Heart left ventricle (tissue), 16 donors: ENCODE measurements at regions of chr17 and their contacts with region 1.

Region 1: DNA sequence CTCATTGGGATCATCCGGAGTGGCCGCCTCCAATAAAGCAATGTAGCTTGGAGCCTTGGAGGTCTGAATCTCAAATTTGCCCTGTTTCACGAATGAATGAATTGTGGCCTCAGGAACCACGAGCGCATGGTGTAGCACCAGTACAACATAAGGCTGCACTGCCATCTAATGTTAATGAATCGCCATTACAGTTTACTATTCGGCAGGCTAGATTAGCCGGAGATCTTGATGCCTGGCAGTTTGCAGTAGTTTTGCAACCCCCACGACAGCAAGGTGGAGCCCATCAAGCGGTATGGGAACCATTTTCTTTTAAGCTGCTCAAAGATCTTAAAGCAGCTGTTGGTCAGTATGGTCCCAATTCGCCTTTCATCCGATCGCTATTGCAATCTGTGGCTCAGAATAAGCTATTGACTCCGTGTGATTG is 18.8 kb downstream of the ALOX15B start:
- DNase-seq: peak in 1 of 5 donors; percentile 37
- ATAC-seq: peak; percentile 68 to 86 (median 82)
- H3K4me3 ChIP-seq: no peak overlapping the region
- H3K27ac ChIP-seq: no peak overlapping the region
- H3K4me1 ChIP-seq: peaks cover 0 to 32% (median 1%) of the 10 kb centered on the region in 12 donors
- H3K27me3 ChIP-seq: peaks cover 9 to 47% (median 33%) of the 10 kb centered on the region in 9 donors
- CTCF ChIP-seq: peak; percentile 66 to 88 (median 72)
- POLR2A ChIP-seq: no peak

Region 2: DNA sequence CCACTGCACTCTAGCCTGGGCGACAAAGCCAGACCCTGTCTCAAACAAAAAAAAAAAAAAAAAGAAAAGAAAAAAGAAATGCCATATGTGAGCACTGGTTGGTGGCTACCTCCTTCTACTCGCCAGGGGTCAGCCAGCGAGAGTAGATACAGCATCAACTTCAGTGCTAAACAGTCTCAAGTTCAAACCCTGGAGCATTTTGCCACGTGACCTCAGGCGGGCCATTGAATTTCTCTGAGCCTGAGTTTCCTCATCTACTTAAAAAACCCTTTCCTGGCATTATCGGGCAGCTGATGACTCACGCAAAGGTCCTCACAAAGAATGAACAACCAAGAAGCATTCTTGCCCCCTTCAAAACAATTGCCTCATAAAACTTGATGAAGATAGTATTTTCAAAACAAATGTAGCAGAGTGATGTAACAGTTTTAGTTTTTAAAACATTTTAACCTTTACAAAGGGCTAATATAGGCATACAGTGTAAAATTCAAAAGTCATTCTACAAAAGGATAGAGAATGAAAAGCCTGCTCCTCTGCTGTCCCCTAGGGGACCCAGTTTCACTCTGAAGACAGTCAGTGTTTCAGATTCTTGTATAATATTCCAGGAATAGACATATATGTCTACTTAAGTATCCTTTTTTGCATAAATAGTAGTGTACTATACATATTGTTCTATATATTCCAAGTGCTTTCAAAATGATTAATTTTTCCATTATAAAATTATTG is 311.8 kb before region 1 on chr17:
- intact Hi-C with region 1: loop called in 3 of 10 experiments (anchors 5 to 10 kb)
- DNase-seq: no peak
- ATAC-seq: no peak
- H3K4me3 ChIP-seq: no peak overlapping the region
- H3K27ac ChIP-seq: no peak overlapping the region
- H3K4me1 ChIP-seq: peaks cover 0 to 10% (median 5%) of the 10 kb centered on the region in 12 donors
- H3K27me3 ChIP-seq: peaks cover 0 to 5% (median 0%) of the 10 kb centered on the region in 9 donors
- CTCF ChIP-seq: no peak
- POLR2A ChIP-seq: no peak

Region 3: GRCh38 chr17:7862692-7863437 is 194.8 kb before region 1 on chr17:
- intact Hi-C with region 1: loop called in 1 of 10 experiments (anchors 5 kb)
- DNase-seq: peak in 1 of 5 donors; percentile 49
- ATAC-seq: no peak
- H3K4me3 ChIP-seq: no peak overlapping the region
- H3K27ac ChIP-seq: no peak overlapping the region
- H3K4me1 ChIP-seq: peaks cover 0 to 20% (median 13%) of the 10 kb centered on the region in 12 donors
- H3K27me3 ChIP-seq: no peaks in the 10 kb centered on the region
- CTCF ChIP-seq: peak; percentile 69 to 90 (median 83)
- POLR2A ChIP-seq: no peak

Region 4: DNA sequence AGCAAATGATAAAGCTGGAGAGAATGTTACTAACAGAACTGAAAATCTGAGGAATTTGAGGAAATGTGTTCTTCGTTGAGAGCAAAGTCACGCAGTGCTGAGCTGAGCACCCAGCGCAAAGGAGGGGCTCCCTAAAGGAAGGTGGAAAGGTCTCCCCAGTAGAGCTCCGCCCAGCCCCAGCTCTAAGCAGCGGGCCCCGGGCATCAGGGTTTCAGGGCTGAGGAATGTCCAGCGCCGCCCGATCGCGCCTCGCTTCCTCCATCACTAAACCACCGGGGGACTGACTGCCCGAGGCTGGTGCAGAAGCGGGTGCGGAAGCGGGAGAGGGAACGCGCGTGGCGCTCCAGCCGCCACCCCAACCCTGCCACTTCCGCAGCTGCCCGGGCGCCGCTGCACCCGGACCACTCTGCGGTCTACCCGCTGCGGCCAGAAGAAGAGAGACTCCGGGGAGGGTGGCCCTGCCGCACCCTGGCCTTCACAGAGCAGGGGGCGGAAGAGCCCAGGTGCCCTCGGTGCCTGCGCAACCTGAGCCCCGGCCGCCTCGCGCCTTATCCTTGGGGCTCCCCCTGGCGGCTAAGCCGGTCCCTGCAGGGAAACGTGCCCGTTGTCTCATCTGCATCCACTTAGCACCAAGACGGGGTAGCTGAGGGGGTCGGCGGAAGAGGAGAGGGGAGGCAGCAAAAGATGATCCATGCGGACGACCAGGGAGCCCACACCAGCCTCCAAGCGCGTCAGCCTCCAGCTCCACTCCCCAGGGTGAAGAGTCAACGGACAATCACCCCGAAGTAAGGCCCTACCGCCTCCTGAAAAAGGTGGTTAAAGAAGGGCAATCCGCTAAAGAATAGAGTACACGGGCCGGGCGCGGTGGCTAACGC is 67.7 kb before region 1 on chr17:
- intact Hi-C with region 1: loop called in 1 of 10 experiments (anchors 5 kb)
- DNase-seq: peak; percentile 73 to 92 (median 83)
- ATAC-seq: peak; percentile 54 to 87 (median 84)
- H3K4me3 ChIP-seq: peak overlapping the region; percentile 16 to 75 (median 63)
- H3K27ac ChIP-seq: peak overlapping the region in 5 of 12 donors; percentile 8 to 84 (median 62)
- H3K4me1 ChIP-seq: peaks cover 0 to 19% (median 5%) of the 10 kb centered on the region in 12 donors
- H3K27me3 ChIP-seq: peaks cover 0 to 6% (median 0%) of the 10 kb centered on the region in 9 donors
- CTCF ChIP-seq: peak; percentile 93 to 100 (median 95)
- POLR2A ChIP-seq: no peak

Region 5: DNA sequence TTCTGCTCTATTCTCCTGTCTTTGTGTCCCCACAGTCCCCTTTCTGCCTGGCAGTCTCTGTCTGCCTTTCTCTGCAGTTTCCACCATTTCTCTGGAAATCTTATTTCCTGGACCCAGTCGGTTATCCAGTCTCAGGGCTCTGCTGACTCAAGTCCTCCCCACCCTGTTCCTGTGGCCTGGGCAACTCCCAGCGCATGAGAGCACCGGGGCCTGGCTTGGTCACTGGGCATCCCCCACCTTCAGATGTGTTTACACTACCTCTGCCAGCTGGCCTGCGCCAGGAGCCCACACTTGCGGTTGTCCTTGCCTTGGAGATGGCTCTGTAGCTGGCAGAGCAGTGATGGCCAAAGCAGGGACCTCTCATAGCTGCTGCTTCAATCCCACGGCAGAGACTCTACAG is 38.0 kb before region 1 on chr17:
- intact Hi-C with region 1: loop called in 1 of 10 experiments (anchors 2 kb)
- DNase-seq: no peak
- ATAC-seq: peak in 2 of 4 donors; percentile 28 to 29
- H3K4me3 ChIP-seq: no peak overlapping the region
- H3K27ac ChIP-seq: no peak overlapping the region
- H3K4me1 ChIP-seq: peaks cover 0 to 67% (median 14%) of the 10 kb centered on the region in 12 donors
- H3K27me3 ChIP-seq: peaks cover 0 to 14% (median 10%) of the 10 kb centered on the region in 9 donors
- CTCF ChIP-seq: no peak
- POLR2A ChIP-seq: no peak

Region 6: GRCh38 chr17:8109661-8110464 is 52.2 kb after region 1 on chr17:
- intact Hi-C with region 1: loop called in 3 of 10 experiments (anchors 2 to 5 kb)
- DNase-seq: peak; percentile 19 to 83 (median 47)
- ATAC-seq: peak in 3 of 4 donors; percentile 64 to 73 (median 67)
- H3K4me3 ChIP-seq: peak overlapping the region in 3 of 12 donors; percentile 12 to 42 (median 26)
- H3K27ac ChIP-seq: no peak overlapping the region
- H3K4me1 ChIP-seq: peaks cover 0 to 17% (median 7%) of the 10 kb centered on the region in 12 donors
- H3K27me3 ChIP-seq: peaks cover 15 to 63% (median 45%) of the 10 kb centered on the region in 9 donors
- CTCF ChIP-seq: peak; percentile 61 to 90 (median 72)
- POLR2A ChIP-seq: no peak

Region 7: GRCh38 chr17:8300627-8301242 is 243.0 kb after region 1 on chr17:
- intact Hi-C with region 1: loop called in 2 of 10 experiments (anchors 5 to 10 kb)
- DNase-seq: peak in 4 of 5 donors; percentile 51 to 79 (median 62)
- ATAC-seq: peak; percentile 82 to 92 (median 90)
- H3K4me3 ChIP-seq: no peak overlapping the region
- H3K27ac ChIP-seq: no peak overlapping the region
- H3K4me1 ChIP-seq: peaks cover 0 to 6% (median 0%) of the 10 kb centered on the region in 12 donors
- H3K27me3 ChIP-seq: no peaks in the 10 kb centered on the region
- CTCF ChIP-seq: peak; percentile 74 to 87 (median 80)
- POLR2A ChIP-seq: no peak

Region 8: GRCh38 chr17:8542599-8543502 is 485.1 kb after region 1 on chr17:
- intact Hi-C with region 1: no loop called
- DNase-seq: no peak
- ATAC-seq: peak; percentile 61 to 94 (median 86)
- H3K4me3 ChIP-seq: no peak overlapping the region
- H3K27ac ChIP-seq: peak overlapping the region in 5 of 12 donors; percentile 2 to 57 (median 30)
- H3K4me1 ChIP-seq: peaks cover 0 to 9% (median 0%) of the 10 kb centered on the region in 12 donors
- H3K27me3 ChIP-seq: no peaks in the 10 kb centered on the region
- CTCF ChIP-seq: no peak
- POLR2A ChIP-seq: no peak